ENCODE measurements at regions of chr11 and their contacts with region 1.

Region 1: DNA sequence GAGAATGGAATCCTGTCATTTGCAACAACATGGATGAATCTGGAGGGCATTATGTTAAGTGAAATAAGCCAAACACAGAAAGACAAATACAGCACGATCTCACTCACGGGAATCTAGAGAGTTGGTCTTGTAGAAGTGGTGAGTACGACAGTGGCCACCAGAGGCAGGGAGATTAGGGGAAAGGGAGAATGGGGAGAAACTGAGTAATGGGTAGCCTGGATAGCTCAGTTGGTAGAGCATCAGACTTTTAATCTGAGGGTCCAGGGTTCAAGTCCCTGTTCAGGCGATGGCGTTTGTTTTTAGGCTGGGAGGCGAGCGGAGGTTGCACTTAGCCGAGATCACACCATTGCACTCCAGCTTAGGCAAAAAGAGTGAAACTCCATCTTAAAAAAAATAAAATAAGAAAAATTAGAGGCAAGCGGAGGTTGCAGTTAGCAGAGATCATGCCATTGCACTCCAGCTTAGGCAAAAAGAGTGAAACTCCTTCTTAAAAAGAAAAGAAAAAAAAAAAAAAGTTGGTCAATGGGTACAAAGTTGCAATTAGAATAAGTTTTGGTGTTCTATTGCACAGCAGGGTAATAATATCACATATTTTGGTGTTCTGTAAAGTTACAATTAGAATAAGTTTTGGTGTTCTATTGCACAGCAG is 95.7 kb upstream of the UBASH3B start:
- DNase-seq: no peak
- ATAC-seq: no peak
- H3K4me3 ChIP-seq: no peak overlapping the region
- H3K4me3 Mint-ChIP-seq: no peak overlapping the region
- H3K27ac ChIP-seq: no peak overlapping the region
- H3K27ac Mint-ChIP-seq: no peak overlapping the region
- H3K4me1 ChIP-seq: no peaks in the 10 kb centered on the region
- H3K4me1 Mint-ChIP-seq: no peaks in the 10 kb centered on the region
- H3K27me3 ChIP-seq: peaks cover 0 to 23% of the 10 kb centered on the region in 2 experiments
- H3K27me3 Mint-ChIP-seq: peaks cover 29% of the 10 kb centered on the region
- CTCF ChIP-seq: no peak

Region 2: DNA sequence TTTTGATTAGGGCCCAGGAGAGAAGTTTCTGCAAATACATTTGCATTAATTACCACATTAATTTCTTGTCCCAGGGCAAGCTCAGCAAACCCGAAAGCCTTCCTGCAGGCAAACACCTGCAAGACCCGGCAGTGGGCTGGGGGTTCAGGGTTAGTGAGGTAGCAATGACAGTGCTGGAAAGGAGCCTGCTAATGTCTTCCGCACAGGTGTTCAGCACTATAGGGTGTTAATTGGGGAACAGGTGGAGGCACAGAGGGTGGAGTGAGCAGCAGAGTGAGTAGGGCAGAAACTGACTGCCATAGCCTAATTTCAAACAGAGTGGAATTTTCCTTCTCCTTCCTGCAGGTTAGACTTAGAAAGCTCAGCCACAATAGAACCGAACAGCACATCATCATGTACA is 44.8 kb after region 1 on chr11:
- CTCF ChIA-PET with region 1: no interaction called
- POLR2A ChIA-PET with region 1: no interaction called
- intact Hi-C with region 1: loop called in 1 of 2 experiments (anchors 5 kb)
- DNase-seq: no peak
- ATAC-seq: no peak
- H3K4me3 ChIP-seq: no peak overlapping the region
- H3K4me3 Mint-ChIP-seq: no peak overlapping the region
- H3K27ac ChIP-seq: no peak overlapping the region
- H3K27ac Mint-ChIP-seq: no peak overlapping the region
- H3K4me1 ChIP-seq: no peaks in the 10 kb centered on the region
- H3K4me1 Mint-ChIP-seq: no peaks in the 10 kb centered on the region
- H3K27me3 ChIP-seq: no peaks in the 10 kb centered on the region
- H3K27me3 Mint-ChIP-seq: no peaks in the 10 kb centered on the region
- CTCF ChIP-seq: no peak